ENCODE measurements at regions of chr11 and their contacts with region 1.

Region 1: GRCh38 chr11:36746886-36747710 is 149.1 kb upstream of the RAG2 start:
- DNase-seq: peak; percentile 88
- ATAC-seq: peak; percentile 90
- H3K4me3 ChIP-seq: no peak overlapping the region
- H3K27ac ChIP-seq: no peak overlapping the region
- H3K4me1 ChIP-seq: no peaks in the 10 kb centered on the region
- H3K27me3 ChIP-seq: no peaks in the 10 kb centered on the region

Region 2: DNA sequence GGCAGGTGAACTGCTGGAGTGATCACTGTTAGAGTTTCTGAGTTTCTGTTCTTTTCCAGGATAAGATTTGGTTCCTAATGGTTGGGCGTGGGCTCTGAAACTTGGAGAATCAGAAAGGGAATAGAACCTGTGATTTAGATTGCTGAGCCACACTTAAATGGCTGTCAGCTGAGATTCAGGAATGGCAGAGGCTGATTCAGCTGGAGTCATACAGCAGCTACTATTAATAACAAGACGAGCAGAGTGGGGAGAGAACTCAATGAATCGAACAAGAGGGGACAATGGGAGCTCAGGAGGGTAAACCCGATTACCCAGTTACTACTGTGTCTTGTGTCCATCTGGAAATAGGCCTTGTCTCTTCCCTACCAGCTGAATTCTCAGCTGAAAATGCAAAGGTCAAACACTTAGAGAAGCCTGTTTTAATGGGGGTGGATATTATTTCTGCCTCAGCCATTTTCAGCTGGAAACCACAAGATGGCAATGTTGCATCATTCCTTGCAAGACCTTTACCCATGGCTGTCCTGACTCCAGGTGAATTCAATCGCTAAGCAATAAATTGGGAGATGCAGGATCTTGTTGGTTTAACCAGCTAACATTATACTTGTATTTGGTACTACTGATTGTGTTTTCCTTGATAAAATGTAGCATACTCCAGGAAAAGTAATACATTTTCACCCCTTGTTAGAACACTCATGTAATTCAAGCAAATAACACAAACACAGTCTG is 44.6 kb before region 1 on chr11:
- intact Hi-C with region 1: loop called (anchors 1 to 2 kb)
- DNase-seq: no peak
- ATAC-seq: peak; percentile 79
- H3K4me3 ChIP-seq: no peak overlapping the region
- H3K27ac ChIP-seq: no peak overlapping the region
- H3K4me1 ChIP-seq: no peaks in the 10 kb centered on the region
- H3K27me3 ChIP-seq: no peaks in the 10 kb centered on the region

Region 3: GRCh38 chr11:36874291-36874690 is 127.2 kb after region 1 on chr11:
- intact Hi-C with region 1: no loop called
- DNase-seq: no peak
- ATAC-seq: no peak
- H3K4me3 ChIP-seq: no peak overlapping the region
- H3K27ac ChIP-seq: no peak overlapping the region
- H3K4me1 ChIP-seq: no peaks in the 10 kb centered on the region
- H3K27me3 ChIP-seq: no peaks in the 10 kb centered on the region

Measured in aorta (tissue), 5 donors.